Psoas muscle (tissue), 8 donors: ENCODE measurements at regions of chr5 and their contacts with region 1.

Region 1: GRCh38 chr5:42514754-42515153 is 91.5 kb downstream of the GHR start:
- DNase-seq: no peak
- ATAC-seq: peak; percentile 66 to 78 (median 74)
- H3K4me3 ChIP-seq: no peak overlapping the region
- H3K27ac ChIP-seq: peak overlapping the region; percentile 88
- H3K4me1 ChIP-seq: peaks cover 61% of the 10 kb centered on the region
- H3K27me3 ChIP-seq: no peaks in the 10 kb centered on the region
- CTCF ChIP-seq: peak; percentile 46

Region 2: GRCh38 chr5:42555797-42556196 is 41.0 kb after region 1 on chr5:
- intact Hi-C with region 1: loop called in 1 of 2 experiments (anchors 5 kb)
- DNase-seq: no peak
- ATAC-seq: peak; percentile 79 to 89 (median 84)
- H3K4me3 ChIP-seq: peak overlapping the region; percentile 2
- H3K27ac ChIP-seq: peak overlapping the region; percentile 84
- H3K4me1 ChIP-seq: peaks cover 32% of the 10 kb centered on the region
- H3K27me3 ChIP-seq: no peaks in the 10 kb centered on the region
- CTCF ChIP-seq: no peak

Region 3: GRCh38 chr5:42583322-42583721 is 68.6 kb after region 1 on chr5:
- intact Hi-C with region 1: loop called (anchors 2 to 5 kb)
- DNase-seq: no peak
- ATAC-seq: peak; percentile 53 to 61 (median 54)
- H3K4me3 ChIP-seq: no peak overlapping the region
- H3K27ac ChIP-seq: peak overlapping the region; percentile 74
- H3K4me1 ChIP-seq: peaks cover 65% of the 10 kb centered on the region
- H3K27me3 ChIP-seq: no peaks in the 10 kb centered on the region
- CTCF ChIP-seq: peak; percentile 78

Region 4: GRCh38 chr5:42876375-42876844 is 361.7 kb after region 1 on chr5:
- intact Hi-C with region 1: no loop called
- DNase-seq: no peak
- ATAC-seq: no peak
- H3K4me3 ChIP-seq: peak overlapping the region; percentile 12
- H3K27ac ChIP-seq: no peak overlapping the region
- H3K4me1 ChIP-seq: no peaks in the 10 kb centered on the region
- H3K27me3 ChIP-seq: peaks cover 0 to 2% (median 0%) of the 10 kb centered on the region in 3 donors
- CTCF ChIP-seq: no peak